ENCODE measurements at regions of chr5 and their contacts with region 1.

Region 1: DNA sequence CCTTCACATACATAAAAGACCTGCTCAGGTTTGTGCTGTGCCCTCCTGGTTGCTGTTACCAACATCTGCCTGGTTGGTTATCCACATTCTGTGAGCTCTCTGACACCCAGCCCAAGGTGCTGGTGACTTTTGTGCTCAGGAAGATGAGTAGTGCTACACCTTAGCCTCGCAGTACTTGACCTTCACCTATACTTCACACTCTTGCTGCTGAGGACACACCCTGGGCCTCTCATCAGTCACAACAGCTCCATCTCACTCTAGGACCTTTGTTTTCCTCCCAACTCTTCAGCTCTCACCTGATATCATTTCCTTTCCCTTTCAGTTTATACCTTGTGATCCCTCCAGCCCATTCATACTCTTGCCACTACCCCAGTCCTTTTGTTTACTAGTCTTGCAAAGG is 10.7 kb upstream of the SLC22A5 start:
- DNase-seq: no peak
- CTCF ChIP-seq: no peak

Region 2: GRCh38 chr5:132369474-132370180 is 10.9 kb after region 1 on chr5 and contains the start of gene SLC22A5:
- CTCF ChIA-PET with region 1: interaction called, 25 read pairs
- POLR2A ChIA-PET with region 1: no interaction called
- DNase-seq: peak; percentile 85
- CTCF ChIP-seq: no peak

Region 3: GRCh38 chr5:132380047-132380446 is 21.3 kb after region 1 on chr5:
- CTCF ChIA-PET with region 1: no interaction called
- POLR2A ChIA-PET with region 1: no interaction called
- DNase-seq: no peak
- CTCF ChIP-seq: no peak

Region 4: GRCh38 chr5:132406144-132406783 is 47.5 kb after region 1 on chr5:
- CTCF ChIA-PET with region 1: no interaction called
- POLR2A ChIA-PET with region 1: no interaction called
- DNase-seq: no peak
- CTCF ChIP-seq: no peak

Measured in GM10248 (cell line).